ENCODE measurements at regions of chr1 and their contacts with region 1.

Region 1: DNA sequence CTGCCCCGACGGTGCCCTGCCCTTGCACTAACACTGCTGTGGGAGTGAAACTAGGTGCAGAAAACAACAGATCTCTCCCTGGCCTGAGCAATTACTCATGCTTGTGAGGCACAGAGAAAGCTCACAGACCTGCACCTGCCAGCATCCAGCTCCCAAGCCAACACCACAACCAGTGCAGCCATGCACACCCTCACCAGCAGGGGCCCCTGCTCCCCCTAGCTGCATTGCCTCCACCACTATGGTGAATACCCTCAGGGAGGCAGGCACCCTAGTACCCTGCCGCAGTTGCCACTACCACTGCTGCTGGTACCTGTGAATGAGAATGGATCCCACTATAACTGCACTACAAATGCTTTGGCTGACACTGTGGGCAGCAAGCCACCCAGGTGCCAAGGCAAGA is 7.1 kb upstream of the DIRAS3 start:
- DNase-seq: no peak
- H3K4me3 ChIP-seq: no peak overlapping the region
- H3K27ac ChIP-seq: no peak overlapping the region
- H3K4me1 ChIP-seq: peaks cover 0 to 4% (median 0%) of the 10 kb centered on the region in 4 experiments; a peak in 3 of 7 replicates
- H3K27me3 ChIP-seq: no peaks in the 10 kb centered on the region
- CTCF ChIP-seq: peak; percentile 58 to 71 (median 62)
- EP300 ChIP-seq: no peak
- POLR2A ChIP-seq: no peak
- RAD21 ChIP-seq: peak; percentile 27 to 43; a peak in 3 of 4 replicates

Region 2: GRCh38 chr1:68046885-68047658 is 10.5 kb before region 1 on chr1:
- CTCF ChIA-PET with region 1: interaction called, 30 read pairs
- POLR2A ChIA-PET with region 1: no interaction called
- DNase-seq: no peak
- H3K4me3 ChIP-seq: no peak overlapping the region
- H3K27ac ChIP-seq: no peak overlapping the region
- H3K4me1 ChIP-seq: 0 out of 7 replicates have a peak, but pooled peaks cover 0 to 2% (median 0%) of the 10 kb centered on the region in 4 experiments
- H3K27me3 ChIP-seq: peaks cover 0 to 22% (median 15%) of the 10 kb centered on the region in 4 experiments; a peak in 6 of 7 replicates
- CTCF ChIP-seq: no peak
- EP300 ChIP-seq: no peak
- POLR2A ChIP-seq: no peak
- RAD21 ChIP-seq: no peak